HEK293 (cell line): ENCODE measurements at regions of chr6 and their contacts with region 1.

Region 1: DNA sequence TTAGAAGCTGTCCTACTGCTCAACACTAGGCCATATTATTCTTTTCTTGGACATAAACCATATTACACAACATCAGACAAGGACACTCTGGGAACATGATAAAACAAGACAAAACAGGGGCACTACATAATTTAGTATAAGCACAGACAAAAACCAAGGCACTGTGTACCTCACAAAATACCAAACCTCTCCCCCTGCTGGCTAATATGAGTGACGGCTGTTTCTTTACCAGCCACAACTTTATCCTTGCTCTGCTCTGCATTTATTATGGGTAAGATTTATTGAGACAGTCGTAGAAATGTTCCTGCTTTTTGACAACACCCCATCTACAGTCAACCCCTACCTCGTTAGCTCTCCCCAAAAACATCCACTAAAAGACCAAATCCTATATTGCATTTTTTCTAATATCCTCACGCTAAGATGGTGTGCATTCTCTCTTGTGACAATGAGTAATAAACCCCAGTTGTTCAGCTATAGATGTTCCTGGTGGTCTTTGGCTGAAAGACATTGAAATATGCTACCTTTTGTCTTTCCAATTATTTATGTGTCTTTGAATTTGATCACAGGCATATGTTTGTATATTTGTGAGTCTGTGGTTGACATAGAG is 23.8 kb upstream of the POLR1H start:
- H3K4me3 ChIP-seq: no peak overlapping the region
- H3K27ac ChIP-seq: no peak overlapping the region
- H3K4me1 ChIP-seq: peaks cover 2% of the 10 kb centered on the region
- CTCF ChIP-seq: peak; percentile 55; the same call in 1 of the 2 replicates

Region 2: DNA sequence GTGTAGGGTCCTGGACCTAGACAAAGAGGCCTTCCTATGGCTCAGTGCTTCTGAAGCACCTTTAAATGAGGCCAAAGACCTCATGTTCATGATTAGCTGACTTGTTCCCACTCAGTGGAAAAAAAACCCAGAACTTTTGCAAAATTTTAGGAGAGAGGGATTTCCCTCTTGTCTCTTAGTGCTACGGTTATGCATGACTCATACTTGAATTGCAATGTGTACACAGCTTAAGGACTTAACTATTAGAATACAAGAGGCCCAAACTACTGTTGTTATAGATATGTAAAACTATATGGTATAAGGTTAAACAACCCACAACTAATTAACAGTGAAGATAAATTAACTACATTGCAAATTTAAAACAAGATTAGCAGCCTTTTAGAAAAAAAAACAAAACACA is 127.3 kb before region 1 on chr6:
- CTCF ChIA-PET with region 1: no interaction called
- POLR2A ChIA-PET with region 1: no interaction called
- H3K4me3 ChIP-seq: no peak overlapping the region
- H3K27ac ChIP-seq: no peak overlapping the region
- H3K4me1 ChIP-seq: 0 out of 2 replicates have a peak, but pooled peaks cover 2% of the 10 kb centered on the region
- CTCF ChIP-seq: no peak

Region 3: GRCh38 chr6:30025186-30025585 is 12.1 kb before region 1 on chr6:
- CTCF ChIA-PET with region 1: interaction called, 16 read pairs
- POLR2A ChIA-PET with region 1: no interaction called
- H3K4me3 ChIP-seq: no peak overlapping the region
- H3K27ac ChIP-seq: no peak overlapping the region
- H3K4me1 ChIP-seq: no peaks in the 10 kb centered on the region
- CTCF ChIP-seq: no peak